ENCODE measurements at regions of chr12 and their contacts with region 1.

Region 1: DNA sequence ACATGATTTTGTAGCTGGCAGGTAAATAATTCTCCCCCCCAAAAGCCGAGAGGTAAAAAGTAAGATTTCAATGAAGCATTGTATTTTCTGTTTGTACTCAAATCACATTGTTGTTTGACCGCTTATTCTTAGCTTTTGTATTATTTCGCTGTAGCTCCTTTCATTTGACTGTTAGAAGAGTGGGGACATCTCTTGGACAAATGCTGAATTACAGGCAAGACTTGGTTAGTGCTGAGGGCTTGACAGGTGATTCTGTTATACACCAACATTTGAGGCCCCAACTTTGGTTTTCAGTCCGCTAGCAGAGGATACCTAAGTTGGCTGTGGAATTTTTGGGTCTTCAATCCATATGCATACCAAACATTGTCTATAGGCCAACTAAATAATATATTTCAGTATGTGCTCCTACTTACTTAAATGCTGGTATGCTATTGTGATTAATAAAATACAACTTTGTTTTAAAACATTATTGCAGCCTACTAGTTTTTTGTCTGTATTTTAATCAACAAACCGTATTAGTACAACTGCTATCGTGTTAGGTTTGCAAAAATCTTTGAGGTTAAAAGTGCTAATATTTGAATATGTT is 102.2 kb downstream of the ERC1 start:
- DNase-seq: peak; percentile 48
- H3K4me3 Mint-ChIP-seq: no peak overlapping the region
- H3K27ac Mint-ChIP-seq: no peak overlapping the region
- H3K4me1 Mint-ChIP-seq: peaks cover 1% of the 10 kb centered on the region
- H3K27me3 Mint-ChIP-seq: no peaks in the 10 kb centered on the region

Region 2: DNA sequence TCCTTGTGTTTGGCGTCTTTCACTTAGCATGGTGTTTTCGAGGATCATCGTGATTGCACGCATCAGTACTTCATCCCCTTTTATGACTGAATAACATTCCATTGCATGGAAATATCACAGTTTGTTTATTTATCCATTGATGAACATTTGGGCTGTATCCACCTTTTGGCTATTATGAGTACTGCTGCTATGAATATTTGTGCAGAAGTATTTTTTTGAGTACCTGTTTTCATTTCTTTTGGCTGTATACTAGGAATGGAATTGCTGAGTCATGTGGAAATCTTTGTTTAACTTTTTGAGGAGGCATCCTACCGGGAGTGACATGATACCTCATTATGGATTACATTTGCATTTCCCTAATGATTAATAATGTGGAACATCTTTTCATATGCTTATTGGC is 274.5 kb before region 1 on chr12:
- CTCF ChIA-PET with region 1: interaction called, 18 read pairs
- DNase-seq: no peak
- H3K4me3 Mint-ChIP-seq: no peak overlapping the region
- H3K27ac Mint-ChIP-seq: no peak overlapping the region
- H3K4me1 Mint-ChIP-seq: peaks cover 28% of the 10 kb centered on the region
- H3K27me3 Mint-ChIP-seq: no peaks in the 10 kb centered on the region

Region 3: DNA sequence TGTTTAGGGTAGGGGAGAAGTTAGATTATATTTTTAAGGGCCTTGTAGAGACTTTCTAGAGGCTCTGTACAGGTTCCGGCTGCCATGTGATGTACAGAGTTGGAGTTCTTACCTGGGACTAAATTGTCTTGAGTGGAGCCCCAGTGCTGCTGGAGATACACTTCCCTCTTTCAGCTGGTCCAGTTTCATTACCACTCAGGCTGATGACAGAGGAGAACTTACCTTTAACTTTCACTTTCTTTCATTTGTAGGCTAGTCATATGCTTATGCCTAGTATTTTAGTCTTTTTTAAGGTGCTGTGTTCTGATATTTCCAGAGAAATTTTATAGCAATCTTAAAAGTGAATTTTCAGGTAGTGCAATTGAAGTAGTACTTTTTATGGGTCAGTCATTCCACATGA is 15.0 kb after region 1 on chr12:
- CTCF ChIA-PET with region 1: interaction called, 14 read pairs
- DNase-seq: no peak
- H3K4me3 Mint-ChIP-seq: no peak overlapping the region
- H3K27ac Mint-ChIP-seq: no peak overlapping the region
- H3K4me1 Mint-ChIP-seq: peaks cover 21% of the 10 kb centered on the region
- H3K27me3 Mint-ChIP-seq: no peaks in the 10 kb centered on the region